ENCODE measurements at regions of chr3 and their contacts with region 1.

Region 1: GRCh38 chr3:141192345-141192744 is 39.3 kb upstream of the PXYLP1 start:
- DNase-seq: peak; percentile 89
- H3K4me3 Mint-ChIP-seq: no peak overlapping the region
- H3K27ac Mint-ChIP-seq: no peak overlapping the region
- H3K4me1 Mint-ChIP-seq: peaks cover 10% of the 10 kb centered on the region
- H3K27me3 Mint-ChIP-seq: peaks cover 25% of the 10 kb centered on the region

Region 2: GRCh38 chr3:140898340-140899180 is 293.8 kb before region 1 on chr3:
- intact Hi-C with region 1: loop called (anchors 1 kb)
- DNase-seq: no peak
- H3K4me3 Mint-ChIP-seq: no peak overlapping the region
- H3K27ac Mint-ChIP-seq: no peak overlapping the region
- H3K4me1 Mint-ChIP-seq: no peaks in the 10 kb centered on the region
- H3K27me3 Mint-ChIP-seq: peaks cover 24% of the 10 kb centered on the region

Region 3: DNA sequence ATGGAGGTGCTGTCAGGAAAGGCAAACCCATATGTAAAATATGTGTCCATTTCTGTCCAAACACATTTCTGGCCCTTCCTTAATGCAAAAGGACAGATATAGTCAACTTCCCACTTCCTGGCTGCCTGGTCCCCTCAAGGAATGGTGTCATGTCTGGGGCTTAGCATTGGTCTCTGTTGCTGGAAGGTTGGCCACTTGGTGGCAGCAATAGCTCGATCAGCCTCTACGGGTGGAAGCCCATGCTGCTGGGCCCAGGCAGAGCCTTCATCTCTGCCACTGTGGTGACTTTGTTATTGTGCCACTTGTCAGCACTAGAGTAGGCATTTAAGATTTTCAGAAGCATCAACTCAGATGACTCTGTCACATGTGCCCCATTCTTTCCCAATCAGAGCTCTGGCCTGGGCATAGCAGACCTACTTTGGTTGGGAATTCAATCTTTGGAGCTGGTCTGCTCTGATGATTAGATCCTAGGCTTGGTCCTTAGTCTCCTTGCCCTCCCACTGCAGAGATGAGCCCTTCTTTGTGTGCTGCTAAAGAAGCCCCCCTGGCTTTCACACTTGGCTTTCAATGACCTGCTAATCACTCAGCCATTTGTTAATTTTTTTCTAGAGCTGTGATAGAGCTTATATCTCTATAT is 192.2 kb before region 1 on chr3:
- intact Hi-C with region 1: loop called (anchors 1 kb)
- DNase-seq: peak; percentile 21
- H3K4me3 Mint-ChIP-seq: no peak overlapping the region
- H3K27ac Mint-ChIP-seq: no peak overlapping the region
- H3K4me1 Mint-ChIP-seq: peaks cover 5% of the 10 kb centered on the region
- H3K27me3 Mint-ChIP-seq: peaks cover 13% of the 10 kb centered on the region

Region 4: GRCh38 chr3:141011232-141011996 is 180.9 kb before region 1 on chr3:
- intact Hi-C with region 1: loop called (anchors 1 kb)
- DNase-seq: peak; percentile 63
- H3K4me3 Mint-ChIP-seq: no peak overlapping the region
- H3K27ac Mint-ChIP-seq: no peak overlapping the region
- H3K4me1 Mint-ChIP-seq: peaks cover 13% of the 10 kb centered on the region
- H3K27me3 Mint-ChIP-seq: peaks cover 39% of the 10 kb centered on the region

Region 5: DNA sequence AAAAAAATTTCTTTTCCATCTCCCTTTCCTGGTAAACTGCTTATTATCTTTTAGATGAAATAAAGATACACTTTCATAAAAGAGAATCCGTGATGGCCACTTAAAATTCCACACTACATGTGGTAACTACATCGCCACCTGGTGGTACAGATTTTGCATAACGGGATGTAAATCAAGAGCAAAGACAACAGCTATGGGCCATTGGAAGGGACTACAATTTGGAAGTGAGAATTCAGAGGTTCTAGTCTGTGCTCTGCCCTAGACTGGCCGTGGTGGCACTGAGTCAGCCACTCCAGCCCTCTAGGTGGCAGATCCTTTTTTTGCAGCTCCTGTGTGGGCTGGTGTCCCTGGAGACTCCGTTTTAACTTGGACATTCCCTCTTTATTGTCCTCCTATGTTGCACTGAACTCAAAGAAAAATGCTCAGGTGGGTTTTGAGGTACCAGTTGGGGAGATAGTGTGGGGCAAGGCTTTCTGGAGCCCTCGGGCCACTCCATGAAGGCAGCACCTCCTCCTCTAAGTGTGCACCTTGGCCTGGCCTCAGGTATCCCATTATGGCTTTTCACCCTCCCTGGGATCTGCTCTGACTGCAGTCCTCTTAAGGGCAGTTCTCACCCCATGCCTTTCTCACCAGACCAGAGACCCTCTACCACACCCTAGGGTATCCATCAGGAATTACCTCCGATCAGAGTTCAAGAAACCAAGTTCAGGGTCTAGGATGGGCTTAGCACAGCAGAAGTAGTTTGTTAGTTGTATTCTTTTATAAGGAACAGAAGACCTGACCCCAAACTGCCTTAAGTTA is 86.3 kb before region 1 on chr3:
- intact Hi-C with region 1: loop called (anchors 5 kb)
- DNase-seq: peak; percentile 27
- H3K4me3 Mint-ChIP-seq: no peak overlapping the region
- H3K27ac Mint-ChIP-seq: no peak overlapping the region
- H3K4me1 Mint-ChIP-seq: no peaks in the 10 kb centered on the region
- H3K27me3 Mint-ChIP-seq: no peaks in the 10 kb centered on the region

Region 6: DNA sequence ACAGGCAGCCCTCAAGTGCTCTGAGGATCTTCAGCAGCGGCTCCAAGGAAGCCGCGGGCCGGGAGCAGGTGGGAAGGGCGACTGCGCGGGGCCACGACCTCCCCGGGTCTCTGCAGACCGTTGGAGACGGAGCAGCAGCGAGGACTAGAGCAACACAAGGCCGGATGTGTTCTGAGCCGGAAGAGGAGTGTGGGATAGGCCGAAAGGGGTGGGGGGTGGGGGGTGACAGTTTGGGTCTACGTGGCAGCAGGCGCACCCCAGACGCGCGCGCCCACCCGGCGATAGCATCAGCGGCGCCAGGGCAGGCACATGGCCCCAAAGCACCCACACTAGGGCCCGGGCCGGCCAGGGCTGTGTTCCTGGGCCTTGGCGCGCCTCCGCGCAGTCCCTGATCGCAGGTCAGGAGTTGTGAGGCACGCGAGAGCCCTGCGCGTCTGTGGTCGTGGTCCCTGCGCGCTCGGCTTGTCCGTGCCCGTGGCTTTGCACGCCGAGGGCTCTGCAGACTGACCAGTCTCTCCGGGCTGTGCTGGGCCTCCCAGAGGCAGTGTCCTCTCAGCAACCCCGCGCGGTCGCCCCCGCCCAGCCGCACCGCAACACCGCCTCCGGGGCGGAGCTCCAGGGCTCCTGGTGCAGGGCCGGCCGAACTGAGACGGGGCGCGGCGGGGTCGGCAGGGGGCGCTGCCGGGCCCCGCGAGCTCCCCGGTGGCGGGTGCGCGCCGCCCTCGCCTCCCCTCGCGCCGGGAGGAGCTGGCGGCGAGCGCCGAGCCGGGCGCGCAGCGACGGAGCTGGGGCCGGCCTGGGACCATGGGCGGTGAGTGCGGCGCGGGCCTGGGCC is 39.0 kb after region 1 on chr3 and contains the start of gene PXYLP1:
- intact Hi-C with region 1: loop called (anchors 2 kb)
- DNase-seq: peak; percentile 90
- H3K4me3 Mint-ChIP-seq: peak within 1 kb of the TSS; percentile 97
- H3K27ac Mint-ChIP-seq: peak within 1 kb of the TSS; percentile 93
- H3K4me1 Mint-ChIP-seq: peaks cover 57% of the 10 kb centered on the region
- H3K27me3 Mint-ChIP-seq: no peaks in the 10 kb centered on the region
- total RNA-seq, gene PXYLP1: 57.2 and 66.0 TPM in 2 replicates

Region 7: DNA sequence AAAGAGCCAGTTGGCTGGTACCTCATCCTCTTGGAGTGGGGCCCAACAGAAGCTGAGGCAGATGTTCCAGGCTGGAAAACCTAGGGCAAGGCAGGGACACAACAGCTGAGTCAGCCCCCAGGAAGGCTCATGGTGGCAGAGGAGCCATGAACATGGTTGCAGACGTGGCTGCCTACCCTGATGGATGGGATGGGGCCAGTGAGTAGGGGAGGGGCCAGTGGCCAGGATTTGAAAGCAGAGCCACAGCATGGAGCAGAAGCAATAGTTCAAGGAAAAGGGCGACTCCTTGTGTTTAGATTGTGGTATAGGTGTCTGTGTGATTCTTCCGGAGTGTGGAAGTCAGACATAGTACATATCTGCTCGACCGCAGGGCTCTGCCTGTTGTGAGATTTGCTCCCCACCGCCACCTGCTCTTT is 63.5 kb after region 1 on chr3:
- intact Hi-C with region 1: loop called (anchors 2 kb)
- DNase-seq: peak; percentile 42
- H3K4me3 Mint-ChIP-seq: no peak overlapping the region
- H3K27ac Mint-ChIP-seq: peak overlapping the region; percentile 57
- H3K4me1 Mint-ChIP-seq: peaks cover 68% of the 10 kb centered on the region
- H3K27me3 Mint-ChIP-seq: no peaks in the 10 kb centered on the region

Region 8: GRCh38 chr3:141353652-141354495 is 161.5 kb after region 1 on chr3:
- intact Hi-C with region 1: no loop called
- DNase-seq: no peak
- H3K4me3 Mint-ChIP-seq: no peak overlapping the region
- H3K27ac Mint-ChIP-seq: no peak overlapping the region
- H3K4me1 Mint-ChIP-seq: peaks cover 3% of the 10 kb centered on the region
- H3K27me3 Mint-ChIP-seq: peaks cover 14% of the 10 kb centered on the region

Measured in activated T-helper 2 cell treated with anti-CD3 and anti-CD28 coated beads, Interferon-gamma antibody, Interleukin-2, Interleukin-4, amounts not matched to agents 10 μg/mL and 5 μg/mL and 100 μg/mL, durations not matched to agents 14 hours and 24 hours and 36 hours (primary cell).